ENCODE measurements at regions of chr7 and their contacts with region 1.

Region 1: GRCh38 chr7:7182156-7183060 is at the start of gene C1GALT1:
- DNase-seq: peak; percentile 97 to 98
- ATAC-seq: peak; percentile 97 to 100 (median 98)
- H3K4me3 ChIP-seq: peak within 1 kb of the TSS; percentile 73 to 98 (median 93)
- H3K27ac ChIP-seq: peak within 1 kb of the TSS; percentile 72 to 99 (median 96)
- H3K4me1 ChIP-seq: peaks cover 0 to 39% (median 25%) of the 10 kb centered on the region in 9 donors
- H3K27me3 ChIP-seq: no peaks in the 10 kb centered on the region
- CTCF ChIP-seq: peak in 8 of 9 donors; percentile 27 to 57 (median 42)
- total RNA-seq, gene C1GALT1: 14.8 to 31.9 (median 21.5) TPM

Region 2: GRCh38 chr7:7251742-7252141 is 69.3 kb after region 1 on chr7:
- intact Hi-C with region 1: loop called in 2 of 10 experiments (anchors 5 kb)
- DNase-seq: no peak
- ATAC-seq: peak in 4 of 8 donors; percentile 28 to 59 (median 46)
- H3K4me3 ChIP-seq: no peak overlapping the region
- H3K27ac ChIP-seq: no peak overlapping the region
- H3K4me1 ChIP-seq: peaks cover 0 to 28% (median 0%) of the 10 kb centered on the region in 9 donors
- H3K27me3 ChIP-seq: no peaks in the 10 kb centered on the region
- CTCF ChIP-seq: no peak

Region 3: GRCh38 chr7:7257899-7258692 is 75.7 kb after region 1 on chr7:
- intact Hi-C with region 1: loop called in 2 of 10 experiments (anchors 5 kb)
- DNase-seq: no peak
- ATAC-seq: peak in 1 of 8 donors; percentile 50
- H3K4me3 ChIP-seq: peak overlapping the region in 1 of 10 donors; percentile 36
- H3K27ac ChIP-seq: peak overlapping the region in 2 of 10 donors; percentile 18 to 84
- H3K4me1 ChIP-seq: peaks cover 0 to 37% (median 8%) of the 10 kb centered on the region in 9 donors
- H3K27me3 ChIP-seq: no peaks in the 10 kb centered on the region
- CTCF ChIP-seq: no peak

Region 4: GRCh38 chr7:7640221-7641128 is 458.1 kb after region 1 on chr7 and contains the start of gene UMAD1:
- intact Hi-C with region 1: loop called in 1 of 10 experiments (anchors 5 kb)
- DNase-seq: peak; percentile 96 to 99
- ATAC-seq: peak; percentile 99 to 100 (median 100)
- H3K4me3 ChIP-seq: peak within 1 kb of the TSS; percentile 69 to 94 (median 78)
- H3K27ac ChIP-seq: peak within 1 kb of the TSS; percentile 55 to 94 (median 86)
- H3K4me1 ChIP-seq: peaks cover 2 to 28% (median 18%) of the 10 kb centered on the region in 9 donors
- H3K27me3 ChIP-seq: no peaks in the 10 kb centered on the region
- CTCF ChIP-seq: no peak
- total RNA-seq, gene UMAD1: 13.4 to 24.7 (median 18.0) TPM

Measured in heart right ventricle (tissue), 16 donors.